ENCODE measurements at regions of chr5 and their contacts with region 1.

Region 1: DNA sequence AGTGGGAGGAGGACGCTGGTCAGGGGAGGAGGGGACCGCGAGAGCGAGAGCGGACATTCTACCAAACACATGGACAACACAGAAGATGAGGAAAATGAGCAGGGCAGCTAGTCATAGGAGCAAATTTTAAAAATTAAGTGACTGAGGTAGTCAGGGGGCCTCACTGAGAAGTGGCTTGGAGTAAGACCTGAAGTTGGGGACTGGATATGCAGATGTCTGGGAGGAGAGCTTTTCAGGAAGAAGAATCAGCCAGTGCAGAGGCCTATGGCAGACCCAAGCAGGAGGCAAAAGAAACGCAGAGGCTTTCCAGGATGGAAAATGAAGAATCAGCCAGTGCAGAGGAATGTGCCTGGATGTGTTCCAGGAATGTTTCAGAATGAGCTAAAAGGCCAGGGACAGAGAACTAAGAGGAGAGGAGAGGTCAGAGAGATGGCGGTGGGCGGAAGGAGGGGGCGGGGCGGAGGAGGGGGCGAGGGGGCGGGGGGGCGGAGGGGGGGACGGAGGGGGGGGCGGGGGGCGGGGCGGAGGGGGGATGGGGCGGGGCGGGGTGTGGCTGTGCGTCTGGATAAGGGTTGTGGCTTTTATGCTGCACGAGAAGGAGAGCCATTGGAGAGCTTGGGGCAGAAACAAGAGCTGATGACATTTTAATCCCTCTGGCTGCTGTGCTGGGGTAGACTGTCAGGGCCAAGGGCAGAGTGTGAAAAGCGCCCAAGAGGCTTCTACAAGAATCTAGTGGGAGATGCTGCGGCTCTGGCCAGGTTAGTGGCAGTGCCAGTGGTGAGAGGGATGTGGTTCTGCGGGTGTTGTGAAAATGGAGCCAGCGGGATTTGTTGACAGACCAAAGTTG is 129.6 kb downstream of the KCNIP1 start:
- DNase-seq: peak; percentile 6
- ATAC-seq: peak; percentile 47
- H3K4me3 Mint-ChIP-seq: peak overlapping the region; percentile 42
- H3K27ac Mint-ChIP-seq: no peak overlapping the region
- H3K4me1 Mint-ChIP-seq: peaks cover 16% of the 10 kb centered on the region
- H3K27me3 Mint-ChIP-seq: peaks cover 6% of the 10 kb centered on the region
- CTCF ChIP-seq: peak; percentile 52

Region 2: GRCh38 chr5:170429014-170429413 is 204.4 kb before region 1 on chr5:
- CTCF ChIA-PET with region 1: interaction called, 118 read pairs
- POLR2A ChIA-PET with region 1: no interaction called
- intact Hi-C with region 1: no loop called
- DNase-seq: no peak
- ATAC-seq: no peak
- H3K4me3 Mint-ChIP-seq: no peak overlapping the region
- H3K27ac Mint-ChIP-seq: no peak overlapping the region
- H3K4me1 Mint-ChIP-seq: no peaks in the 10 kb centered on the region
- H3K27me3 Mint-ChIP-seq: no peaks in the 10 kb centered on the region
- CTCF ChIP-seq: no peak

Region 3: DNA sequence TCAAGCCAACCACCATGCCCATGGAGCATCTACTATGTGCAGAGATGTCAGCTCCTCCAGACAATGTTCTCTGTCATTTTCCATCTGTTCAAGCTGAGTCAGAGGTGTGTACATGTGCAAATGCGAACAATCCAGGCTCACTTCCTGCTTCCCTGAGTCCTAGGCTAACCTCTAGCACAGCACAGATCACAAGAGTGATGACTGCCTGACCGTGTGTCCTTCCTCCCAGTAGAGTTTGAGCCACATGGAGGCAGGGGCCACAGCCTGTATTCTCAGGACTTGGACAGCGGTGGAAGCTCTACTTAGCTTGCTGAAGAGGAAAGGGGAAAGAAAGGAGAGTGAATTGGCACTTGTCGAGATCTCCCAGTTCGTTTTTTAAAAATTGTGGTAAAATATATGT is 42.4 kb before region 1 on chr5:
- CTCF ChIA-PET with region 1: no interaction called
- POLR2A ChIA-PET with region 1: no interaction called
- intact Hi-C with region 1: no loop called
- DNase-seq: no peak
- ATAC-seq: no peak
- H3K4me3 Mint-ChIP-seq: no peak overlapping the region
- H3K27ac Mint-ChIP-seq: no peak overlapping the region
- H3K4me1 Mint-ChIP-seq: no peaks in the 10 kb centered on the region
- H3K27me3 Mint-ChIP-seq: peaks cover 14% of the 10 kb centered on the region
- CTCF ChIP-seq: no peak

Region 4: GRCh38 chr5:170603578-170604565 is 29.6 kb before region 1 on chr5:
- CTCF ChIA-PET with region 1: interaction called, 24 read pairs
- POLR2A ChIA-PET with region 1: no interaction called
- intact Hi-C with region 1: no loop called
- DNase-seq: peak; percentile 66
- ATAC-seq: peak; percentile 85
- H3K4me3 Mint-ChIP-seq: no peak overlapping the region
- H3K27ac Mint-ChIP-seq: no peak overlapping the region
- H3K4me1 Mint-ChIP-seq: peaks cover under 1% of the 10 kb centered on the region
- H3K27me3 Mint-ChIP-seq: peaks cover 21% of the 10 kb centered on the region
- CTCF ChIP-seq: peak; percentile 60

Region 5: DNA sequence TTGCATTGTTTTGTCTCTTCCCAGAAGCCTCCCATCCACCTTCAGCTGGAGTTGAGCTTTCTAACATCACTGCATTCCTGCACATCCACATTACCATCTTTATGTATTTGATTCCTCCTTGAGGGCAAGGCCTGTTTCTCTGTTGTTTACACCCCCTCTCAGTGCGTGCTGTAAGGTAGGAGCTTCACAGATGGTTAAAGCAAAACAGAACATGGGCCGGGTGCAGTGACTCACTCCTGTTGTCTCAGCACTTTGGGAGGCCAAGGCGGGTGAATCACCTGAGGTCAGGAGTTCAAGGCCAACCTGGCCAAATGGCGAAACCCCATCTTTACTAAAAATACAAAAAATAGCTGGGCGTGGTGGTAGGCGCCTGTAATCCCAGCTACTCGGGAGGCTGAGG is 18.7 kb before region 1 on chr5:
- CTCF ChIA-PET with region 1: interaction called, 20 read pairs
- POLR2A ChIA-PET with region 1: no interaction called
- intact Hi-C with region 1: no loop called
- DNase-seq: peak; percentile 23
- ATAC-seq: no peak
- H3K4me3 Mint-ChIP-seq: no peak overlapping the region
- H3K27ac Mint-ChIP-seq: no peak overlapping the region
- H3K4me1 Mint-ChIP-seq: no peaks in the 10 kb centered on the region
- H3K27me3 Mint-ChIP-seq: peaks cover 3% of the 10 kb centered on the region
- CTCF ChIP-seq: no peak

Region 6: GRCh38 chr5:170644116-170644900 is 10.8 kb after region 1 on chr5:
- CTCF ChIA-PET with region 1: interaction called, 11 read pairs
- POLR2A ChIA-PET with region 1: no interaction called
- intact Hi-C with region 1: no loop called
- DNase-seq: no peak
- ATAC-seq: no peak
- H3K4me3 Mint-ChIP-seq: no peak overlapping the region
- H3K27ac Mint-ChIP-seq: no peak overlapping the region
- H3K4me1 Mint-ChIP-seq: no peaks in the 10 kb centered on the region
- H3K27me3 Mint-ChIP-seq: peaks cover 16% of the 10 kb centered on the region
- CTCF ChIP-seq: no peak